ENCODE measurements at regions of chr1 and their contacts with region 1.

Region 1: DNA sequence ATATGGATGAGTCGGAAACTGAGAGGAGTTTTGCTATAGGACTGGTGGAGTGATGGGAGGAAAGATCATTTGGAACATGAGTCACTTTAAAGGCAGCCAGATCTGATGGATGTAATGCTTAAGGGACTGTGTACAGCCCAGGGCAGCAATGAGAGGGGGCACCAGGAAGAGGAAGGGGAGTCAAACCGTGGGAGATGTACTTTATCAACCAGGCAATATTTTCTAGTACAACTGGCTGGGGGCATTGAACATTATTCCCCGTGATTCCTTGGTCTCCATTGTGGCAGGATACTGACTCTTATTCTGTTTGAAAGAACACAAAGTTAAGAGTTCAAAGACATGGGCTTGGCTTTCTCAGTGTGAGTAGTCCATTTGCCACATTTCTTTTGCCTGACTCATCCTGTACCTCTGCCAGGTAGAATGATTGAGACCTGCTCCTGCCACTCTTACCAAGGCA is 268.2 kb upstream of the NR5A2 start:
- DNase-seq: peak; percentile 95
- H3K4me3 Mint-ChIP-seq: peak overlapping the region; percentile 51
- H3K27ac Mint-ChIP-seq: peak overlapping the region; percentile 85
- H3K4me1 Mint-ChIP-seq: peaks cover 32% of the 10 kb centered on the region
- H3K27me3 Mint-ChIP-seq: no peaks in the 10 kb centered on the region
- CTCF ChIP-seq: no peak

Region 2: GRCh38 chr1:199742547-199742946 is 16.7 kb before region 1 on chr1:
- CTCF ChIA-PET with region 1: interaction called, 7 read pairs
- POLR2A ChIA-PET with region 1: interaction called, 19 read pairs
- intact Hi-C with region 1: loop called (anchors 2 kb)
- DNase-seq: peak; percentile 96
- H3K4me3 Mint-ChIP-seq: no peak overlapping the region
- H3K27ac Mint-ChIP-seq: no peak overlapping the region
- H3K4me1 Mint-ChIP-seq: no peaks in the 10 kb centered on the region
- H3K27me3 Mint-ChIP-seq: no peaks in the 10 kb centered on the region
- CTCF ChIP-seq: no peak

Region 3: DNA sequence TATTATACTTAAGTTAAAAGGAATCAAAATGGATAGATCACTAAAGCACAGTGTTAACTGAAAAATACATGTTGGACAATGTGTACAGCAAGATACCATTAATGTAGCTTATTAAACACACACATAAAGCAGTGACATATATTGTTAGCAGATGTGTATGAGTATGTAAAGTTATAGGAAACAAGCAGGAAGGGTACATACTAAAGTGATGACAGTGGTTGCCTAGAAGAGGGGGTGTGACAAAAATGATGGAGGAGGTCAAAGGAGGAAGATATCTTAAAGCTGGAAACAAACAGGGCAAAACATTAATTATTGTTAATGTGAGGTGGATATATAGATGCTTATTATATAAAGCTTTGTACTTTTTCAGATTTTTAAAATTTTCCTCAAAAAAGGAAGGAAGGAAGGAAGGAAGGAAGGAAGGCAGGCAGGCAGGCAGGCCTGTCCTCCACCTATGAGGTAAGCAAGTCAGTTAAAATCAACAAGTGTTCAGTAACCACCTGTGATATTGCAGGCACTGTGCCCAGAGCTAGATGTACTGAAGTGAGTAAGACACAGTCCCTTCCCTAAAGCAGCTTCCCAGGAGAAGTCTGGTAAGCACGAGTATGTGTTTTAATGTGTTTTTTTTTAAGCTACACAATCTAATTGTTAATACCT is 15.3 kb after region 1 on chr1:
- CTCF ChIA-PET with region 1: interaction called, 16 read pairs
- POLR2A ChIA-PET with region 1: interaction called, 14 read pairs
- intact Hi-C with region 1: no loop called
- DNase-seq: peak; percentile 93
- H3K4me3 Mint-ChIP-seq: no peak overlapping the region
- H3K27ac Mint-ChIP-seq: peak overlapping the region; percentile 28
- H3K4me1 Mint-ChIP-seq: peaks cover 30% of the 10 kb centered on the region
- H3K27me3 Mint-ChIP-seq: no peaks in the 10 kb centered on the region
- CTCF ChIP-seq: no peak

Region 4: GRCh38 chr1:199832451-199832850 is 73.2 kb after region 1 on chr1:
- CTCF ChIA-PET with region 1: no interaction called
- POLR2A ChIA-PET with region 1: no interaction called
- intact Hi-C with region 1: no loop called
- DNase-seq: no peak
- H3K4me3 Mint-ChIP-seq: no peak overlapping the region
- H3K27ac Mint-ChIP-seq: no peak overlapping the region
- H3K4me1 Mint-ChIP-seq: no peaks in the 10 kb centered on the region
- H3K27me3 Mint-ChIP-seq: no peaks in the 10 kb centered on the region
- CTCF ChIP-seq: no peak